Breast epithelium (tissue), 4 donors: ENCODE measurements at regions of chr16 and their contacts with region 1.

Region 1: DNA sequence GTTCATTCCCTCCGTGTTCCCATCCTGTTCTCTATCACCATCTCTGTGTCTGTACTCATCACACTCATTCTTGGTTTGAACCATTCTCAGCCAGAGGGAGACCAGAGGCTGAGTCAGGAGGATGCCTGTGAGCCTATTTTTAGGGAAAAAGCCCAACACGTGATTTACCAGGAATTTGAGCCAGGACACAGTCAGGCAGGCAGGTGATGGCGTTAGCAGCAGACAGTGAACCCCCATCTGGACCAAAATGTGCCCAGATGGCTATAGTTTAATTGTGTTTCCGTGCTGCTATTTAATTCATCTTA is 317.7 kb downstream of the C16orf95 start:
- DNase-seq: no peak
- H3K4me3 ChIP-seq: no peak overlapping the region
- H3K27ac ChIP-seq: no peak overlapping the region
- H3K4me1 ChIP-seq: no peaks in the 10 kb centered on the region
- H3K27me3 ChIP-seq: peaks cover 0 to 14% of the 10 kb centered on the region in 2 donors
- CTCF ChIP-seq: no peak
- POLR2A ChIP-seq: no peak

Region 2: DNA sequence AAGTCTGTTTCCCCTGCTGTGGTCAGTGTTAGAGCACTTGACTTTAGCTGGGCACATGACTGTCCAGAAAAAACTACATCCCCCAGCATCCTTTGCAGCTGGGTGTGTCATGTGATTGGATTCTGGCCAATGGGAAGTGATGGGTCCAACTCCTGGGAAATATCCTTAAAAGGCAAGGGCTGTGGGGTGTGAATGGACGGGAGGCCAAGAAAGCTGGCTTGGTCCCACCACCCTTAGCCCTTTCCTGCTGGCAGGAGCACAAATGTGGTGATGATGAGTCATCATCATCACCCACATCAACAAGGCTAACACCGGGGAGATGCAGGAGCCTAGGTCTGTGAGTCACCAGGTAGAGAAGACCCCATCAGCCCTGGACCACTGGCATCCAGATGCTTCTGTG is 24.0 kb before region 1 on chr16:
- intact Hi-C with region 1: loop called (anchors 1 kb)
- DNase-seq: peak in 1 of 2 donors; percentile 55
- H3K4me3 ChIP-seq: no peak overlapping the region
- H3K27ac ChIP-seq: peak overlapping the region in 1 of 2 donors; percentile 22
- H3K4me1 ChIP-seq: no peaks in the 10 kb centered on the region
- H3K27me3 ChIP-seq: no peaks in the 10 kb centered on the region
- CTCF ChIP-seq: no peak
- POLR2A ChIP-seq: no peak

Region 3: GRCh38 chr16:87017365-87018012 is 18.0 kb after region 1 on chr16:
- intact Hi-C with region 1: loop called (anchors 2 kb)
- DNase-seq: no peak
- H3K4me3 ChIP-seq: no peak overlapping the region
- H3K27ac ChIP-seq: no peak overlapping the region
- H3K4me1 ChIP-seq: no peaks in the 10 kb centered on the region
- H3K27me3 ChIP-seq: peaks cover 0 to 14% of the 10 kb centered on the region in 2 donors
- CTCF ChIP-seq: no peak
- POLR2A ChIP-seq: no peak

Region 4: GRCh38 chr16:87560428-87561199 is 561.1 kb after region 1 on chr16:
- intact Hi-C with region 1: no loop called
- DNase-seq: no peak
- H3K4me3 ChIP-seq: no peak overlapping the region
- H3K27ac ChIP-seq: no peak overlapping the region
- H3K4me1 ChIP-seq: no peaks in the 10 kb centered on the region
- H3K27me3 ChIP-seq: no peaks in the 10 kb centered on the region
- CTCF ChIP-seq: no peak
- POLR2A ChIP-seq: no peak